CD4-positive, alpha-beta T cell (primary cell): ENCODE measurements at regions of chr2 and their contacts with region 1.

Region 1: DNA sequence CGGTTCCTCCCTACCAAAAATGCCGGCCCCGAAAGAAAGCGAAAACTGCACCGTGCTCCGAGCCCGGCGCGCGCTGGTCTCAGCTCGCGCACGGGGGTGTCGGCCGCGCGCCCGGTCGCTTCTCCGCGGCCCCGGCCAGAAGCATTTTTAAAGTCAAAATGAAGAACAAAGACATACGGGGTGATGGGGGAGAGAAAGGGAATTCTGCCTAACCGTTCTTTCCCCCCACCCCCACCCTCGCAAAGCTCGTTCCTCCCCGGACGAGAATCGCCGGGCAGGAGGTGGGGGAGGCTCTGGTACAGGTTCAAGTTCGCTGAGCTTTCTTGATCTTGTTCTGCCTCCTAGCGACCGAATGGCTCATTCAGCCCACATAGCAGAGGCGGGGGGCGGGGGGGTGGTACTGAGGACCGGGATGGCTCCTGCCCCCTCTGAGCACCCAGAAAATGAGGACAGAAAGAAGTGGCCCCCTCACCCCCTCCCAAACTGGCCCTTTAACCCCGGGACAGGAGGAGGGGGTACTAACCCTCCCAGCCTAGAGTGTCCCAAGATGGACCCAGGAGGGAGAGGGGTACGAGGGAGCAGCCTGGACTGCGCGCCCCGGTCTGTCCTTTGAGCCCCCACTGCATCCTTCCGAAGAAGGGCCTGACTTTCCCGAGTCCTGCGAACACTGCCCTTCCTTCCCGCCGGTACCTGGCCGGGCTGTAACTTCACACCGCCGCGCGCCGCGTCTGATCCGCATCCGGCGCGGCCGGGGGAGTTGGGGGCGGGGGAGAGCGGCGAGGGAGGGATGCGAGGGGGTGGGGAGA is 3.1 kb downstream of the BCL11A start:
- DNase-seq: peak in 8 of 14 experiments; percentile 23 to 76 (median 50)
- ATAC-seq: peak; percentile 62
- H3K4me3 ChIP-seq: peak overlapping the region; percentile 62
- H3K4me3 Mint-ChIP-seq: peak overlapping the region; percentile 96
- H3K27ac ChIP-seq: peak overlapping the region in 1 of 2 donors; percentile 53
- H3K27ac Mint-ChIP-seq: peak overlapping the region; percentile 86
- H3K4me1 ChIP-seq: peaks cover 61% of the 10 kb centered on the region
- H3K4me1 Mint-ChIP-seq: peaks cover 45% of the 10 kb centered on the region
- H3K27me3 ChIP-seq: peaks cover 58 to 83% of the 10 kb centered on the region in 2 experiments
- H3K27me3 Mint-ChIP-seq: peaks cover 78% of the 10 kb centered on the region
- CTCF ChIP-seq: peak; percentile 21

Region 2: GRCh38 chr2:59025157-59025757 is 1525.1 kb before region 1 on chr2:
- CTCF ChIA-PET with region 1: no interaction called
- POLR2A ChIA-PET with region 1: no interaction called
- intact Hi-C with region 1: loop called in 1 of 2 experiments (anchors 10 kb)
- DNase-seq: peak in 4 of 14 experiments; percentile 3 to 43 (median 24)
- ATAC-seq: no peak
- H3K4me3 ChIP-seq: no peak overlapping the region
- H3K4me3 Mint-ChIP-seq: no peak overlapping the region
- H3K27ac ChIP-seq: no peak overlapping the region
- H3K27ac Mint-ChIP-seq: no peak overlapping the region
- H3K4me1 ChIP-seq: no peaks in the 10 kb centered on the region
- H3K4me1 Mint-ChIP-seq: no peaks in the 10 kb centered on the region
- H3K27me3 ChIP-seq: no peaks in the 10 kb centered on the region
- H3K27me3 Mint-ChIP-seq: no peaks in the 10 kb centered on the region
- CTCF ChIP-seq: no peak

Region 3: DNA sequence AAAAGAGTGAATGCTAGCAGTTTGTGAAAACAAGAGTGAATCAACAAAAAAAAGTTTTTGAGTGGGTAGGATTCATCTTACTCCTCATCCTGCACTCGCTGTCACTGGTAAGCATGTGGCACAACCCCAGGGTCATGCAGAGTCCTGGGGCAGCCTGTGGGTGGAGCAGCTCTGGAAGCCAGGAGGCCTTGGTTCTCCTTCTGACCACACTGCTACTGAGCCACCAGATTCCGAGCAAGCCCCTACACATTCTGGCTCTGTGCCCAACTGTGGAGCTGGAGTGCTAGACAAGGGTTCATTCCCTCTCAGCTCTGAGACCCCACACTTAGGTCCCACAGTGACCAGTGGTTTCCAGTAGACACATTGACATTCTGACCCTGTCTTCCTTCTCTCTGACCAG is 667.6 kb before region 1 on chr2:
- CTCF ChIA-PET with region 1: no interaction called
- POLR2A ChIA-PET with region 1: interaction called, 4 read pairs
- intact Hi-C with region 1: loop called (anchors 5 kb)
- DNase-seq: peak in 1 of 14 experiments; percentile 5
- ATAC-seq: no peak
- H3K4me3 ChIP-seq: no peak overlapping the region
- H3K4me3 Mint-ChIP-seq: no peak overlapping the region
- H3K27ac ChIP-seq: no peak overlapping the region
- H3K27ac Mint-ChIP-seq: no peak overlapping the region
- H3K4me1 ChIP-seq: peaks cover 19% of the 10 kb centered on the region
- H3K4me1 Mint-ChIP-seq: peaks cover 30% of the 10 kb centered on the region
- H3K27me3 ChIP-seq: no peaks in the 10 kb centered on the region
- H3K27me3 Mint-ChIP-seq: no peaks in the 10 kb centered on the region
- CTCF ChIP-seq: no peak

Region 4: GRCh38 chr2:59888015-59888414 is 662.4 kb before region 1 on chr2:
- CTCF ChIA-PET with region 1: no interaction called
- POLR2A ChIA-PET with region 1: interaction called, 4 read pairs
- intact Hi-C with region 1: loop called (anchors 5 kb)
- DNase-seq: peak; percentile 12 to 80 (median 38)
- ATAC-seq: peak; percentile 92
- H3K4me3 ChIP-seq: no peak overlapping the region
- H3K4me3 Mint-ChIP-seq: peak overlapping the region; percentile 65
- H3K27ac ChIP-seq: peak overlapping the region in 1 of 2 donors; percentile 37
- H3K27ac Mint-ChIP-seq: peak overlapping the region; percentile 77
- H3K4me1 ChIP-seq: peaks cover 19% of the 10 kb centered on the region
- H3K4me1 Mint-ChIP-seq: peaks cover 54% of the 10 kb centered on the region
- H3K27me3 ChIP-seq: no peaks in the 10 kb centered on the region
- H3K27me3 Mint-ChIP-seq: no peaks in the 10 kb centered on the region
- CTCF ChIP-seq: no peak

Region 5: DNA sequence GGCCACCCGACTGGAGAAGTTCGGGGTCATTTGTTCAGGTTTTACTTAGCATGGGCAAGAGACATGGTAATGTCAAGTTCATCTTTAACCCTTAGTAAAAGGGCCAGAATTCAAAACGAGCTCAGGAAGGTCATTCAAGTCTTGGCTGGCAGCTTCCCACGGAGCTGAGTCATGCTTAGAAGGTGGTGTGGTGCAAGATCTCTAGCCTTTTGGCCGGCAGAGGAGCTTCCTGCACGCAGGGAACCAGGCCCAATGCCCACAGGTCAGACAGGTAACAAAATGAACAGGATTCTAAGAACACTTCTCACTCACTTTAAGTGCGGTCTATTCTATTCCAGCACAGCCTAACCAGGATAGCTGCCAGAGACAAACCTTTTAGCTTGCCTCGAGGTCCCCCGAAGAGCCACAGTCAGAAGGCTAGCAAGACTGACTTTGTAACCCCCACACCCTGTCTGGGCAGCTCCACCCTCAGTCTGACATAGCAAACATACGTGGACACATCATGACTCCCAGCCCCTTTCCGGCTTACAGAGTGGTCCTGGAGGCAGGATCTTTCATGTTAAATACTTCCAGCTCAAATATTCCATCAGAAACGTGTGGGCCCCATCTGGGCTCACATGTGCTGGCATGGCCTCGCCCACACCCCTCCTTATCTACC is 289.6 kb before region 1 on chr2:
- CTCF ChIA-PET with region 1: interaction called, 3 read pairs
- POLR2A ChIA-PET with region 1: no interaction called
- intact Hi-C with region 1: loop called in 1 of 2 experiments (anchors 5 kb)
- DNase-seq: no peak
- ATAC-seq: no peak
- H3K4me3 ChIP-seq: no peak overlapping the region
- H3K4me3 Mint-ChIP-seq: no peak overlapping the region
- H3K27ac ChIP-seq: no peak overlapping the region
- H3K27ac Mint-ChIP-seq: no peak overlapping the region
- H3K4me1 ChIP-seq: peaks cover 2% of the 10 kb centered on the region
- H3K4me1 Mint-ChIP-seq: peaks cover 14% of the 10 kb centered on the region
- H3K27me3 ChIP-seq: no peaks in the 10 kb centered on the region
- H3K27me3 Mint-ChIP-seq: peaks cover 5% of the 10 kb centered on the region
- CTCF ChIP-seq: no peak

Region 6: GRCh38 chr2:60317844-60318243 is 232.5 kb before region 1 on chr2:
- CTCF ChIA-PET with region 1: no interaction called
- POLR2A ChIA-PET with region 1: no interaction called
- intact Hi-C with region 1: no loop called
- DNase-seq: peak in 2 of 14 experiments; percentile 10 to 15
- ATAC-seq: no peak
- H3K4me3 ChIP-seq: no peak overlapping the region
- H3K4me3 Mint-ChIP-seq: no peak overlapping the region
- H3K27ac ChIP-seq: no peak overlapping the region
- H3K27ac Mint-ChIP-seq: no peak overlapping the region
- H3K4me1 ChIP-seq: no peaks in the 10 kb centered on the region
- H3K4me1 Mint-ChIP-seq: no peaks in the 10 kb centered on the region
- H3K27me3 ChIP-seq: no peaks in the 10 kb centered on the region
- H3K27me3 Mint-ChIP-seq: no peaks in the 10 kb centered on the region
- CTCF ChIP-seq: no peak